ENCODE measurements at regions of chr1 and their contacts with region 1.

Region 1: DNA sequence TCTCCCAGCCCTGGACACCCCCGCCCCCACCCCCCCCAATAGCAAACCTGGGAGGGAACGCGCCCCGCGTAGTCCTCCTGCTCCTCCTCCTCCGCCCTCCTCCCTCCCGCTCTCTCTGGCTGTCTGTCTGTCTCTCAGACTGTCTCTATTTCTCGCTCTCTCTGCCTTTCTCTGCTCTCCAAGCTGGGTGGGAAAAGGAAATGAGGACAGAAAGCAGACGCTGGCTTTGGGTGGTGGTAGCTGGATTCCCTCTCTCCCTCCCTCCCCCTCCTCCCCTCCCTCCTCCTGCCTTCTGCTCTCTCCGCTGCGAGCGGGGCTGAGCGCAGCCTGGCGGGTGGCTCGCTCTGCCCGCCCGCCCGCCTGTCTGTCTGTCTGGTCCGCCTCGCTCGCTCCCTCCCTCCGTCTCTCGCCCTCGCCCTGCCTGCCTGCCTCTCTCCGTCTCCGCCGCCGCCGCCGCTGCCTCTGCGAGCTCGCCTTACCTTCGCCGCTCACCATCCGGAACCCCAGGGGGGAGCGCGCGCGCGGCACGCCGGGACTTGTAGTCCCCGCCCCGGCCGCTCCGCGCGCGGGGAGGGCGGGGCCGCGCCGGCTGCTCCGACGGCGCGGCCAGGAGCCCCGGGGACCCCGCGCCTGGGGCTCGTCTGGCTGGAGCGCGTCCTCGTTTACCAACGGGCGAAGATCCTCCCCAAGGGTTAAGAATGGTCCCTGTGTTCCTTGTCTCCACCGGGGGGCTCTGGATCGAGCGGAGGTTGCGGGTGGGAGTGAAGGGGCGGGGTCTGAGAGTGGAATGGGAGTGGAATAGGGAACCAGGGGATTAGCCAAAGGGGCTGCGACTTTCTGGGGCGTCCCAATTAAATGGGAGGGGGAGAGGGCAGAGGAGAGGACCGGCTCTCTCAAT is at the start of gene AHDC1:
- DNase-seq: peak; percentile 91 to 95 (median 92)
- H3K4me3 ChIP-seq: peak within 1 kb of the TSS; percentile 74 to 89 (median 83)
- H3K27ac ChIP-seq: peak within 1 kb of the TSS in 1 of 2 experiments; percentile 79
- H3K4me1 ChIP-seq: peaks cover 3 to 83% (median 71%) of the 10 kb centered on the region in 4 experiments
- H3K27me3 ChIP-seq: no peaks in the 10 kb centered on the region

Region 2: GRCh38 chr1:27300341-27301051 is 303.4 kb before region 1 on chr1:
- CTCF ChIA-PET with region 1: interaction called, 53 read pairs
- POLR2A ChIA-PET with region 1: no interaction called
- DNase-seq: peak; percentile 92 to 96 (median 93)
- H3K4me3 ChIP-seq: no peak overlapping the region
- H3K27ac ChIP-seq: no peak overlapping the region
- H3K4me1 ChIP-seq: peaks cover 0 to 29% (median 21%) of the 10 kb centered on the region in 4 experiments
- H3K27me3 ChIP-seq: no peaks in the 10 kb centered on the region

Region 3: GRCh38 chr1:27416387-27417111 is 187.4 kb before region 1 on chr1:
- CTCF ChIA-PET with region 1: interaction called, 55 read pairs
- POLR2A ChIA-PET with region 1: no interaction called
- DNase-seq: peak; percentile 84 to 93 (median 92)
- H3K4me3 ChIP-seq: no peak overlapping the region
- H3K27ac ChIP-seq: peak overlapping the region in 1 of 2 experiments; percentile 17
- H3K4me1 ChIP-seq: peaks cover 4 to 29% (median 14%) of the 10 kb centered on the region in 4 experiments
- H3K27me3 ChIP-seq: no peaks in the 10 kb centered on the region

Region 4: DNA sequence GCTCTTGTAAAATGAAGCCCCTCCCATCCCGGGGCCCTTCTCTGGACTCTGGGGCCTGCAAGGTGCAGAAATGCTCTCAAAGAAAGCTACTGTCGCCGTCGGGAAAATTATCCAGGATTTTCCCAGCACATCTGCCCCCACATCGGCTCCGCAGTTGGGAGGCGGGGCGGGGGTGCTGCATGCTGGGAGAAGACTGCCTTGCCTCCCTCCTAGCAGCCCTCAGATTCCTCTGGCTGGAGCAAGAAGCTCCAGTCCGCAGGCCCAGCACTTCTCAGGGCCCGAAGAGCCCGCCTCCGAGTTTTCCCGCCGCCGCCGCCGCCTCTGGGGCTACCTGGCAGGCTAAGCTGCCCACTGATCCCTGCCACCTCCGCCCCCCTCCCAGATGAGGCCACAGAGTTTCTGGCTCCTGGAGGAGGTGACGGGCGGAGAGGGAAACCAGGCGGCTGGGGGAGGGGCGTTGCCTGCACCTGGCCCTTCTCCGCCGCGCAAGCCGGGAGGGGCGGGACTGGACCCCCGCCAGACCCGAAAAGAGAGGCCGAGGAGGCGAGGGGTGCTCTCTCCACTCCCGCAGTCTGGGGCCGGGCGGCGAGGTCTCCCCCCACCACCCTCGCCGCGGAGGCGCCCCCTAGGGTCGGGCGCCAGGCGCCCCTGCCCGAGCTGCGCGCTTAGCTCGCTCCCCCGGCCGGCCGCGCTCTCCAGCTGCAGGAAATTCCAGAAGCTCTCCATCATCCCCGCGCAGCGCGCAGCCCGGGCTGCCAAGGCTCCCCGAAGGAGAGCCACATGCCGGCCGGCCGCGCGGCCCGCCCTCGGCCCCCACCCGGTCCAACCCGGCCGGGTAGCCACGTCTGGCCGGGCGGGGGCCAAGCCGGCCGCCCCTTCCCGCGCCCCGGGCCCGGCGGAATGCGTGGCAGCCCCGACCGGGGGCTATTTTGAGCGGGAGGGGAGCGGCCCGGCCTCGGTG is 28.8 kb before region 1 on chr1:
- CTCF ChIA-PET with region 1: interaction called, 69 read pairs
- POLR2A ChIA-PET with region 1: interaction called, 4 read pairs
- DNase-seq: peak; percentile 39 to 62 (median 54)
- H3K4me3 ChIP-seq: peak overlapping the region in 5 of 7 experiments; percentile 23 to 74 (median 52)
- H3K27ac ChIP-seq: no peak overlapping the region
- H3K4me1 ChIP-seq: peaks cover 7 to 89% (median 68%) of the 10 kb centered on the region in 4 experiments
- H3K27me3 ChIP-seq: no peaks in the 10 kb centered on the region

Region 5: DNA sequence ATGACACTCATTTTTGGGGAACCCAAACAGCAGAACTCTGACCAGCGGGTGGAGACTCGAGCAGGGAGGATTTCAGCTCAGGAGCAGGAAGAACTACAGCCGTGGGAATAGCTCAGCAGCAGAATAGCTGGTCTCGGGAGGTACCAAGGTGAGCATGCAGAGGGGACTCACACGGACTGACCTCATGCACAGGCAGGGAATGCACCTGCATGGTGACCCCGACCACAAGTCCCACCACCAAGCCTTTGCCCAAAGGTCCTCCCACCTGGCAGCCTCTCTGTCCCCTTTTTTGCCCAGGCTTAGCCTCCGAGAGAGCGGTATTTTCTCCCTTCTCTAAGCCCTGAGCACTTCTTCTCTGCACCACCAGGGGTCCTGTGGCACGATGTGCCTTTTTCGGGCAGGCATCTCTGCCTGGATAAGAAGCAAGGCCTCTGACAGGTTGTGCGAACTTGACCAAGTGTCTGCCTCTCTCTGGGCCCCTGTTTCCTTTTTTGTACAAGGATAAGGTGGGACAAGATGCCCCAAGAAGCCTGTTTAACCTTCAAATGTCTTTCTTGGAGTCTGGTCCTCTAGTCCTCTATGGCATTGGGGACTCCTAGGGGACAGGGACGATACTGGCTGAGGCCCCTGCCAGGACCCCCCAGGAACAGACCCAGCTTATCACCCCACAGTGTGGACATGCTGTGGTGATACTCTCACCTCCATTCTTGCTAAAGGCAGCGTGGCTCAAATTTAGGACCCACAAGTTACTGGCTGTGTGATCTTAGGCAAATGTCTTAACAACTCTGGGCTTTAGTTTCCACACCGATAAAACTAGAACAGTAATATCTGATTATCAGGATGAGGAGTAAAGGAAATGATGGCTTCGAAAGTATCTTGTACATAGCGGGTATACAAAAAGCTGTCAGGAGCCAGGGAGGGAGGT is 40.0 kb after region 1 on chr1:
- CTCF ChIA-PET with region 1: interaction called, 20 read pairs
- POLR2A ChIA-PET with region 1: no interaction called
- DNase-seq: peak; percentile 54 to 76 (median 70)
- H3K4me3 ChIP-seq: no peak overlapping the region
- H3K27ac ChIP-seq: no peak overlapping the region
- H3K4me1 ChIP-seq: peaks cover 0 to 7% (median 5%) of the 10 kb centered on the region in 4 experiments
- H3K27me3 ChIP-seq: no peaks in the 10 kb centered on the region

Region 6: GRCh38 chr1:27668808-27669723 is 65.1 kb after region 1 on chr1:
- CTCF ChIA-PET with region 1: interaction called, 311 read pairs
- POLR2A ChIA-PET with region 1: interaction called, 5 read pairs
- DNase-seq: peak; percentile 59 to 79 (median 77)
- H3K4me3 ChIP-seq: peak overlapping the region in 6 of 7 experiments; percentile 28 to 74 (median 58)
- H3K27ac ChIP-seq: no peak overlapping the region
- H3K4me1 ChIP-seq: peaks cover 7 to 35% (median 19%) of the 10 kb centered on the region in 4 experiments
- H3K27me3 ChIP-seq: no peaks in the 10 kb centered on the region

Region 7: DNA sequence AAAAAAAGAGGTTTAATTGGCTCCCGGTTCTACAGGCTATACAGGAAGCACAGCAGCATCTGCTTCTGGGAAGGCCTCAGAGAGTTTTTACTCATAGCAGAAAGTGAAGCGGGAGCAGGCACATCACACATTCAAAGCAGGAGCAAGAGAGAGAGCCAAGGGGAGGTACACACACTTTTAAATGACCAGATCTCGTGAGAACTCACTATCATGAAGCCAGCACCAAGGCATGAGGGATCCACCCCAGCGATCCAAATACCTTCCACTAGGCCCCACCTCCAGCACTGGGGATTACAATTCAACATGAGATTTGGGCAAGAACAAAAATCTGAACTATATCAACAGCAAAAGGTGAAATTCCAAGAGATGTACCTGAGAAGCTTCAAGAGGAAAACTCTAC is 101.0 kb after region 1 on chr1:
- CTCF ChIA-PET with region 1: no interaction called
- POLR2A ChIA-PET with region 1: no interaction called
- DNase-seq: no peak
- H3K4me3 ChIP-seq: no peak overlapping the region
- H3K27ac ChIP-seq: no peak overlapping the region
- H3K4me1 ChIP-seq: no peaks in the 10 kb centered on the region
- H3K27me3 ChIP-seq: no peaks in the 10 kb centered on the region

Region 8: GRCh38 chr1:27789540-27790041 is 185.7 kb after region 1 on chr1:
- CTCF ChIA-PET with region 1: no interaction called
- POLR2A ChIA-PET with region 1: no interaction called
- DNase-seq: peak; percentile 58 to 80 (median 68)
- H3K4me3 ChIP-seq: peak overlapping the region in 1 of 7 experiments; percentile 16
- H3K27ac ChIP-seq: peak overlapping the region; percentile 48 to 66
- H3K4me1 ChIP-seq: peaks cover 0 to 13% (median 10%) of the 10 kb centered on the region in 4 experiments
- H3K27me3 ChIP-seq: no peaks in the 10 kb centered on the region

Measured in common myeloid progenitor, CD34-positive (primary cell).